ENCODE measurements at regions of chr10 and their contacts with region 1.

Region 1: GRCh38 chr10:59906417-59907202 is at the start of gene CCDC6:
- DNase-seq: peak; percentile 95 to 97 (median 95)
- H3K4me3 ChIP-seq: peak within 1 kb of the TSS; percentile 75 to 100 (median 98)
- H3K27ac ChIP-seq: peak within 1 kb of the TSS; percentile 76 to 87
- H3K4me1 ChIP-seq: peaks cover 29 to 48% (median 40%) of the 10 kb centered on the region in 4 experiments
- H3K27me3 ChIP-seq: no peaks in the 10 kb centered on the region

Region 2: DNA sequence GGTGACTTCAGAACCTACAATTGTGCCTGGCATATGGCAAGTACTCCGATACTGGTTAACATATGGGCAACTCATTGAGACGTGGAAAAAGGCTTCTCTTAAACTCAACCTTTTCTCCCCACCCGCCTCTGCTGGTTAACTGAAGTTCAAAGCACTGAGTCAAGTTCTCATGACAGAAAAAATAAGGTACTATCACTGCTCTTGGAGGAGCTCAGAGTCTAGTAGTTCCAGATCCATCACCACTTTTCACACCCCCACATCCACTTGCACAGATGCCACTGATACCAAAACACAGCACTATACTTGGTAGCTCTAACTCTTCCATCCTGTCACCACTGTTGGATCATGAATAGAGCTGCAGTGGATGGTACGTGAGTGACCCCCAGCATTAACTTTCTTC is 36.5 kb before region 1 on chr10:
- CTCF ChIA-PET with region 1: interaction called, 63 read pairs
- POLR2A ChIA-PET with region 1: interaction called, 7 read pairs
- DNase-seq: no peak
- H3K4me3 ChIP-seq: no peak overlapping the region
- H3K27ac ChIP-seq: no peak overlapping the region
- H3K4me1 ChIP-seq: peaks cover 5 to 28% (median 11%) of the 10 kb centered on the region in 4 experiments
- H3K27me3 ChIP-seq: no peaks in the 10 kb centered on the region

Region 3: GRCh38 chr10:60003651-60004523 is 97.3 kb after region 1 on chr10:
- CTCF ChIA-PET with region 1: no interaction called
- POLR2A ChIA-PET with region 1: no interaction called
- DNase-seq: no peak
- H3K4me3 ChIP-seq: no peak overlapping the region
- H3K27ac ChIP-seq: no peak overlapping the region
- H3K4me1 ChIP-seq: no peaks in the 10 kb centered on the region
- H3K27me3 ChIP-seq: no peaks in the 10 kb centered on the region

Region 4: GRCh38 chr10:60073781-60074656 is 167.4 kb after region 1 on chr10:
- CTCF ChIA-PET with region 1: no interaction called
- POLR2A ChIA-PET with region 1: no interaction called
- DNase-seq: no peak
- H3K4me3 ChIP-seq: no peak overlapping the region
- H3K27ac ChIP-seq: no peak overlapping the region
- H3K4me1 ChIP-seq: no peaks in the 10 kb centered on the region
- H3K27me3 ChIP-seq: no peaks in the 10 kb centered on the region

Region 5: GRCh38 chr10:60237977-60238758 is 331.6 kb after region 1 on chr10:
- CTCF ChIA-PET with region 1: no interaction called
- POLR2A ChIA-PET with region 1: no interaction called
- DNase-seq: peak; percentile 1 to 25 (median 22)
- H3K4me3 ChIP-seq: no peak overlapping the region
- H3K27ac ChIP-seq: no peak overlapping the region
- H3K4me1 ChIP-seq: peaks cover 7 to 27% (median 12%) of the 10 kb centered on the region in 4 experiments
- H3K27me3 ChIP-seq: no peaks in the 10 kb centered on the region

Measured in common myeloid progenitor, CD34-positive (primary cell).